ENCODE measurements at regions of chr20 and their contacts with region 1.

Region 1: DNA sequence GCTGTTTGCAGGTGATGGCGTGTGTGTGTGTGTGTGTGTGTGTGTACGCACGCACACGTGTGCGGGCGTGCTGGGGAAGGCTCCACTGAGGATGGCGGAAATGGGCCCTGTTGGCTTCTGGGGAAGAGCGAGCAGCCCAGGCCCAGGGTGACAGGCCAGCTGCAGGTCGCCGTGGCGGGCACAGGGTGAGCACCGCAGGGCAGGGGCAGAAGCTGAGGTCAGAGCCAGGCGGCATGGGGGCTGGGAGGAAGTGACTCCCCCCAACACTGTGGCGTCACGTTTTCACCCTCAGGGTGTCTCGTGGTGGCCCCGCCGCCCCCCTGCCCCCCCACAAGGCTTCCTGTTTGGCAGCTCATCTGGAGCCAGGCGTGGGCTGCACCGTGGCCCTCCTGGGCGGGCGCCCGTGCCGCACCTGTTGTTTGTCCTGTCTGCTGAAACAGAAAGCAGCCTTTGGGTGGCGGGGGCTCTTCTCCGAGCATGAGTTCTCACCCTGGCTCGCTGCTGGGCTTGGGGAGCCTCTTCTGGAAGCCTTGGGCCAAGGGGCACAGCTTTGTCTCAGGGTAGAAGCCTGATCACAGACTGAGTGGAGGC is 7.1 kb downstream of the RBM38 start:
- DNase-seq: peak; percentile 83 to 97 (median 94)
- ATAC-seq: peak; percentile 71
- H3K4me3 ChIP-seq: peak overlapping the region; percentile 54
- H3K4me3 Mint-ChIP-seq: peak overlapping the region; percentile 85
- H3K27ac ChIP-seq: peak overlapping the region; percentile 90 to 99
- H3K27ac Mint-ChIP-seq: peak overlapping the region; percentile 96
- H3K4me1 ChIP-seq: peaks cover 100% of the 10 kb centered on the region
- H3K4me1 Mint-ChIP-seq: peaks cover 95% of the 10 kb centered on the region
- H3K27me3 ChIP-seq: no peaks in the 10 kb centered on the region
- H3K27me3 Mint-ChIP-seq: peaks cover 4% of the 10 kb centered on the region
- CTCF ChIP-seq: no peak

Region 2: DNA sequence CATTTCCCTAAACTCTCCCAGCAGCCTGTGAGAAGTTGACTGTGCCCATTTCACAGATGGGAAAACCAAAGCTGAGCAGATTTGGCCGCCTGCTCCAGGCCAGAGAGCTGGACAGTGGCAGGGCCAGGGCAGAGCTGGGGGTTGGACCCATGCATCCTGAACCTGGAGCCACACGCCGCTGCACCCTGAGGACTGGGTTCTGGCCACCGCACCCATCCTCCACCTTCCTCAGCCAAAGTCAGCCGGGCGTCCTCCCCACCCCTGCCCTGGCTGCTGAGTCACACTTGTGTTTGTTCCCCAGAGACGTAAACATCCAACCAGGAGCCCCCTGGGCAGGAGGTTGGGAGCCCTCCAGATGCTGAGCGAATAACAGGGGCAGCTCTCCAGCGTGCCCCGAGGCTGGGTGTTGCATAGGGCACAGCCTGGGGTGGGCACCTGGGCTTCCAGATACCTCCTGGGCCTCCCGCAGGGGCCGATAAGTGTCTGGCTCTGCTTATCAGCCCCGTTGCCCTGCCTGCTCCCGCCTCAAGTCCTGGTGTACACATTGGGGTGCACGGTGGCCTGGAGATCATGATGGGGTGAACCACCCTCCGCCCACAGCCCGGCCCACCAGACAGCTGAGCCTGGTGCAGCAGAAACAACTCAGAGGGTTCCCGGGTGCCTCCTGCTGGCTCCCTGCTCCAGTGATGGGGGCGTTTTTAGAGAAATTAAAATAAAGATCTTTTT is 16.7 kb after region 1 on chr20:
- CTCF ChIA-PET with region 1: no interaction called
- POLR2A ChIA-PET with region 1: interaction called, 46 read pairs
- intact Hi-C with region 1: no loop called
- DNase-seq: no peak
- ATAC-seq: no peak
- H3K4me3 ChIP-seq: no peak overlapping the region
- H3K4me3 Mint-ChIP-seq: no peak overlapping the region
- H3K27ac ChIP-seq: no peak overlapping the region
- H3K27ac Mint-ChIP-seq: no peak overlapping the region
- H3K4me1 ChIP-seq: peaks cover 13% of the 10 kb centered on the region
- H3K4me1 Mint-ChIP-seq: peaks cover 19% of the 10 kb centered on the region
- H3K27me3 ChIP-seq: no peaks in the 10 kb centered on the region
- H3K27me3 Mint-ChIP-seq: no peaks in the 10 kb centered on the region
- CTCF ChIP-seq: no peak

Region 3: GRCh38 chr20:57450419-57450818 is 52.1 kb after region 1 on chr20:
- CTCF ChIA-PET with region 1: no interaction called
- POLR2A ChIA-PET with region 1: interaction called, 14 read pairs
- intact Hi-C with region 1: no loop called
- DNase-seq: peak in 6 of 14 experiments; percentile 10 to 58 (median 44)
- ATAC-seq: peak; percentile 67
- H3K4me3 ChIP-seq: no peak overlapping the region
- H3K4me3 Mint-ChIP-seq: peak overlapping the region; percentile 62
- H3K27ac ChIP-seq: no peak overlapping the region
- H3K27ac Mint-ChIP-seq: peak overlapping the region; percentile 83
- H3K4me1 ChIP-seq: peaks cover 38% of the 10 kb centered on the region
- H3K4me1 Mint-ChIP-seq: peaks cover 42% of the 10 kb centered on the region
- H3K27me3 ChIP-seq: no peaks in the 10 kb centered on the region
- H3K27me3 Mint-ChIP-seq: no peaks in the 10 kb centered on the region
- CTCF ChIP-seq: no peak

Region 4: DNA sequence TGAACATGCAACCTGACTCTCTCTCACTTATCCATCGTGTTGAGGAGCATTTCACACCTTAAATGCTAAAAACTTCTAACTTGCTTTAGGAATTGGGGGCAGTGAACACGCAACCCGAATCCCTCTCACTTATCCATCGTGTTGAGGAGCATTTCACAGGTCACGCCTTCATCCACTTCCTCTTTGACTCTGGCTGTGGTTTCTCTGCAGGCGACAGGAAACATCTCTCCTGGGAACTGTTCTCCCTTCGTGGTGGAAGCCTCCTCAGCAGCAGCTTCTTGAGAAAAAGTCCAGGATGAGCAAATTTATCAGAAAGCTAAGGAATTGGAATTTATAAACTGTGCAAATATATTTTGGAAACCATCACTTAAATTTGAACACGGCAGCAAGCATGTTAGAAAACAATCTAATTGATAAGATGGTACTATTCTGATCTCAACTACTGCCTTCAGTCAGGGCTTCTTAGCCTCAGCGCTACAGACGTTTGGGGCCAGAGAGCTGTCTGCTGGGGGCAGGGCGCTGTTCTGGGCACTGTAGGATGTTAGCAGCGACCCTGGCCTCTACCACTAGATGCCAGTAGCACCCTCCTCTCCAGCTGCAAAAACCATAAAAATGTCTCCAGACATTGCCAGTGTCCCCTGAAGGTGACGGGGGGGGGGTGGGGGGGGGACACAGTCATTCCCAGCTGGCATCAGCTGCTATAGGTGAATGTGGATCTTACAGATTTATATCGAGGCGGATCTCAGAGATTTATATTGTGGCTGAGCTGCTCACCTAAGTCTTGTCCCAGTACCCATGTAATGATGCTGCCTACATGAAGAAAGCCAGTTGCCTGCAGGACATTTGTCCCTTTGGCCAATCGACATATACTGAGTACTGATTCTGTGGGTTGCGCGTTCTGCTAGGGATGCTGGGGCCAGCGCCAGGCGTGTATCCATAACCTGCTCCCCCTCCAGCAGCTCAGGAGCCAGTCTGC is 100.4 kb after region 1 on chr20:
- CTCF ChIA-PET with region 1: interaction called, 5 read pairs
- POLR2A ChIA-PET with region 1: interaction called, 12 read pairs
- intact Hi-C with region 1: no loop called
- DNase-seq: peak in 8 of 14 experiments; percentile 18 to 69 (median 38)
- ATAC-seq: peak; percentile 78
- H3K4me3 ChIP-seq: no peak overlapping the region
- H3K4me3 Mint-ChIP-seq: no peak overlapping the region
- H3K27ac ChIP-seq: no peak overlapping the region
- H3K27ac Mint-ChIP-seq: no peak overlapping the region
- H3K4me1 ChIP-seq: peaks cover 15% of the 10 kb centered on the region
- H3K4me1 Mint-ChIP-seq: peaks cover 13% of the 10 kb centered on the region
- H3K27me3 ChIP-seq: peaks cover 19 to 22% of the 10 kb centered on the region in 2 experiments
- H3K27me3 Mint-ChIP-seq: peaks cover 51% of the 10 kb centered on the region
- CTCF ChIP-seq: peak; percentile 28

Region 5: GRCh38 chr20:57709931-57710799 is 311.8 kb after region 1 on chr20 and contains the start of gene PMEPA1:
- CTCF ChIA-PET with region 1: no interaction called
- POLR2A ChIA-PET with region 1: no interaction called
- intact Hi-C with region 1: loop called (anchors 5 kb)
- DNase-seq: peak; percentile 85 to 98 (median 94)
- ATAC-seq: peak; percentile 84
- H3K4me3 ChIP-seq: peak within 1 kb of the TSS; percentile 87
- H3K4me3 Mint-ChIP-seq: peak within 1 kb of the TSS; percentile 97
- H3K27ac ChIP-seq: peak within 1 kb of the TSS; percentile 75 to 84
- H3K27ac Mint-ChIP-seq: peak within 1 kb of the TSS; percentile 95
- H3K4me1 ChIP-seq: peaks cover 32% of the 10 kb centered on the region
- H3K4me1 Mint-ChIP-seq: peaks cover 50% of the 10 kb centered on the region
- H3K27me3 ChIP-seq: peaks cover 0 to 3% of the 10 kb centered on the region in 2 experiments
- H3K27me3 Mint-ChIP-seq: no peaks in the 10 kb centered on the region
- CTCF ChIP-seq: peak; percentile 1
- total RNA-seq, gene PMEPA1: 15.7 to 18.0 TPM

Region 6: DNA sequence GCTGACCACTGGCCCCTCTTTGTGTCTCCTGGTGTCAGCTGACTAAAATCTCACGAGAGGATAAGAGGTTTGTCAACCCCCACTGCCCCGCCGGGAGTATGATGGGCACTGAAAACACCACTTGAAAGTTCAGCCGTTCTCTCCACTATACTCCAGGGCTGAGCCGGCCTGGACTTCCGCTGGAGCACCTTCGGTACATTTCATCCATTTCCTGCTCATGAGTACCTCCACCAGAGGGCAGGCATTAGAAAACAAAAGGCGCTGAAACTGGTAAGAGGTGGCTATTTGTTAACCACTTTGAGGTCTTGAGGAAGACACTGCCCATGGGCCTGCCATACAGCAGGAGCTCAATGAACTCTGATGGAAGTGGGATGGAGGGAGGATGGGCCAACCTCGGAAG is 848.0 kb after region 1 on chr20:
- CTCF ChIA-PET with region 1: no interaction called
- POLR2A ChIA-PET with region 1: no interaction called
- intact Hi-C with region 1: no loop called
- DNase-seq: no peak
- ATAC-seq: no peak
- H3K4me3 ChIP-seq: no peak overlapping the region
- H3K4me3 Mint-ChIP-seq: no peak overlapping the region
- H3K27ac ChIP-seq: no peak overlapping the region
- H3K27ac Mint-ChIP-seq: no peak overlapping the region
- H3K4me1 ChIP-seq: no peaks in the 10 kb centered on the region
- H3K4me1 Mint-ChIP-seq: peaks cover 5% of the 10 kb centered on the region
- H3K27me3 ChIP-seq: no peaks in the 10 kb centered on the region
- H3K27me3 Mint-ChIP-seq: no peaks in the 10 kb centered on the region
- CTCF ChIP-seq: no peak